ENCODE measurements at regions of chr10 and their contacts with region 1.

Region 1: GRCh38 chr10:97572214-97572989 is at the start of gene ANKRD2:
- DNase-seq: peak; percentile 89
- H3K4me3 Mint-ChIP-seq: peak within 1 kb of the TSS; percentile 50
- H3K27ac Mint-ChIP-seq: peak within 1 kb of the TSS; percentile 57
- H3K4me1 Mint-ChIP-seq: peaks cover 40% of the 10 kb centered on the region
- H3K27me3 Mint-ChIP-seq: no peaks in the 10 kb centered on the region
- CTCF ChIP-seq: peak; percentile 91
- total RNA-seq, gene ANKRD2: 1.8 and 5.8 TPM in 2 replicates

Region 2: DNA sequence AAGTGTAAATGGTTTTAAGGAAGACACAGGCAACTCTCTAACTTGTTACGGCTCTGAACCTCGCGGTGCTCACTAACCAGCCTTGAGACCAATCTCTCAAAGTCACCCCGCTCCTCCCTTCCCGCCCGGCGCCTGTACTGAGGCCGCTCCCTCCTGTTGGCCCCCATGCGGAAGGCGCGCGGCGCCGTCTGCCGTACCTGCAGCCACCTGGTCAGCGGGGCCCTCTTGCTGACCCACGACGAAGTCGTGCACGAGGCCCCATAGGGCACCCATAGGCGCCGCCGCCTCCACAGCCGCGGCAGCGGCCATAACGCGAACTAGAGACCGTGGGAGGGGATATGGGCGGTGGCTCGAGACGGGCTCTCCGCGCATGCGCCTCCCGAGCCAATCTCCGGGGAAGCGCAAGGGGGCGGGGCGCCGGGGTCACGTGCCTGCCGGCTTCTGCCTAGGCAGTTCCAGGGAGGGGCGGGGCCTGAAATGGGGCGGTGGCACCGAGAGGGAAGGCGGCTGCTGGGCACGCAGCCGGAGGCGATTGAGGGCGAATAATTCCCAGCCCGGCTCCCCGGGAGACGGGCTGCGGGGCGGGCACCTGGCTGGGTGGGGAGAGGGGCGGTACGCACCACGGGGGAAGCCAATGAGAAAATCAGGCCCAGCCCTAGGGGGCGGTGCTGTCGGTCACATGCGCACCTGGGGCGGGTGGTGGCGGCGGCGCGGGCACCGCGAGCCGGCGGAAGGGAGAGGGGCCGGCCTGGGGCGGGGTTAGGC is 74.1 kb before region 1 on chr10 and contains the start of gene MMS19:
- CTCF ChIA-PET with region 1: interaction called, 4 read pairs
- POLR2A ChIA-PET with region 1: interaction called, 16 read pairs
- intact Hi-C with region 1: no loop called
- DNase-seq: peak; percentile 98
- H3K4me3 Mint-ChIP-seq: peak within 1 kb of the TSS; percentile 88
- H3K27ac Mint-ChIP-seq: peak within 1 kb of the TSS; percentile 91
- H3K4me1 Mint-ChIP-seq: peaks cover 29% of the 10 kb centered on the region
- H3K27me3 Mint-ChIP-seq: no peaks in the 10 kb centered on the region
- CTCF ChIP-seq: no peak
- total RNA-seq, gene MMS19: 67.0 and 67.2 TPM in 2 replicates

Region 3: GRCh38 chr10:97543025-97543575 is 29.3 kb before region 1 on chr10:
- CTCF ChIA-PET with region 1: interaction called, 12 read pairs
- POLR2A ChIA-PET with region 1: interaction called, 4 read pairs
- intact Hi-C with region 1: no loop called
- DNase-seq: peak; percentile 95
- H3K4me3 Mint-ChIP-seq: no peak overlapping the region
- H3K27ac Mint-ChIP-seq: peak overlapping the region; percentile 73
- H3K4me1 Mint-ChIP-seq: peaks cover 28% of the 10 kb centered on the region
- H3K27me3 Mint-ChIP-seq: no peaks in the 10 kb centered on the region
- CTCF ChIP-seq: no peak

Region 4: DNA sequence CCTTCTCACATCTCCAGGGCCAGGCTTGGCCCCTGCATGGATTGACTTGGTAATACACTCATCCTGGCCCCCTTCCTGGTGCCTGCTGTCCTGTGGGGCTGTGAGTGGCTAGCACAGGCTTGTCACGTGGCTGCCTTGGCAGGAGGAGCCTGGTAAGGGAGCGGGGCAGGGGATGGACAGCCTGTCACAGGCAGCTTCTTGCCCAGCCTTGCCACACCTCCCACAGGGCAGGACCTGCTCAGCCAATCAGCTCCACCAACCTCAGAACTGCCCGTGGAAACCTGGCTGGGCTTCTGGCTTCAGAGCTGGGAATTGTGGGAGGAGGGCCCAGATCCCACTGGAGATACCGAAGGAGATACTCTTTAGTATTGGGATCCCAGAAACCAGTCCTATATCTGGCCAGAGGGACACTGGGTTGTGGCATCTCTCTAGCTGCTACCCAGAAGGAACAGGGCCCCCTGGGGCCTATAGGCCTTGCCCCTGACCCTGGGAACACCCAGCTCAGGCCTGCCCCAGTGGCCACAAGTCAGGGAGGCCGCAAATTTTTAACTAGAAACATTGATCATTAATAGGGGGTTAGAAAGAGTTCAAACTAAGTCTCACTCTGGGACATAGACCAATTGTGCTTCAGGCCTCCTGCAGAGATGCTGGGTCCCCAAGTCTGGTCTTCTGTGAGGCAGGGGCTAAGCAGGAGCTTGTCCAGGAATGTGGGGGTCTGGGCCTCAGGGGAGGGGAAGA is 11.8 kb after region 1 on chr10 and contains the start of gene HOGA1:
- CTCF ChIA-PET with region 1: interaction called, 8 read pairs
- POLR2A ChIA-PET with region 1: interaction called, 19 read pairs
- intact Hi-C with region 1: no loop called
- DNase-seq: peak; percentile 85
- H3K4me3 Mint-ChIP-seq: peak within 1 kb of the TSS; percentile 35
- H3K27ac Mint-ChIP-seq: peak within 1 kb of the TSS; percentile 78
- H3K4me1 Mint-ChIP-seq: peaks cover 22% of the 10 kb centered on the region
- H3K27me3 Mint-ChIP-seq: no peaks in the 10 kb centered on the region
- CTCF ChIP-seq: no peak
- total RNA-seq, gene HOGA1: 0.88 and 1.7 TPM in 2 replicates

Region 5: GRCh38 chr10:97640174-97640867 is 67.9 kb after region 1 on chr10 and contains the start of gene PI4K2A:
- CTCF ChIA-PET with region 1: no interaction called
- POLR2A ChIA-PET with region 1: interaction called, 12 read pairs
- intact Hi-C with region 1: no loop called
- DNase-seq: peak; percentile 99
- H3K4me3 Mint-ChIP-seq: peak within 1 kb of the TSS; percentile 87
- H3K27ac Mint-ChIP-seq: peak within 1 kb of the TSS; percentile 10
- H3K4me1 Mint-ChIP-seq: peaks cover 15% of the 10 kb centered on the region
- H3K27me3 Mint-ChIP-seq: no peaks in the 10 kb centered on the region
- CTCF ChIP-seq: no peak
- total RNA-seq, gene PI4K2A: 23.5 and 26.6 TPM in 2 replicates